Ovary (tissue), 10 donors: ENCODE measurements at regions of chr12 and their contacts with region 1.

Region 1: GRCh38 chr12:8108808-8109398 is 14.5 kb upstream of the CLEC4A start:
- DNase-seq: peak; percentile 63 to 79 (median 76)
- H3K4me3 ChIP-seq: no peak overlapping the region
- H3K27ac ChIP-seq: no peak overlapping the region
- H3K4me1 ChIP-seq: no peaks in the 10 kb centered on the region
- H3K27me3 ChIP-seq: no peaks in the 10 kb centered on the region
- CTCF ChIP-seq: peak; percentile 84 to 89 (median 87)
- EP300 ChIP-seq: no peak
- POLR2A ChIP-seq: no peak

Region 2: GRCh38 chr12:8226355-8226754 is 117.5 kb after region 1 on chr12:
- intact Hi-C with region 1: loop called in 1 of 4 experiments (anchors 10 kb)
- DNase-seq: no peak
- H3K4me3 ChIP-seq: no peak overlapping the region
- H3K27ac ChIP-seq: no peak overlapping the region
- H3K4me1 ChIP-seq: no peaks in the 10 kb centered on the region
- H3K27me3 ChIP-seq: no peaks in the 10 kb centered on the region
- CTCF ChIP-seq: no peak
- EP300 ChIP-seq: no peak
- POLR2A ChIP-seq: no peak